MCF 10A (cell line): ENCODE measurements at regions of chr18 and their contacts with region 1.

Region 1: GRCh38 chr18:50218432-50219197 is 23.7 kb upstream of the MYO5B start:
- DNase-seq: peak; percentile 53
- H3K4me3 Mint-ChIP-seq: no peak overlapping the region
- H3K27ac Mint-ChIP-seq: no peak overlapping the region
- H3K4me1 Mint-ChIP-seq: no peaks in the 10 kb centered on the region
- H3K27me3 Mint-ChIP-seq: no peaks in the 10 kb centered on the region
- CTCF ChIP-seq: peak; percentile 53

Region 2: GRCh38 chr18:49784427-49785185 is 434.0 kb before region 1 on chr18:
- CTCF ChIA-PET with region 1: no interaction called
- POLR2A ChIA-PET with region 1: no interaction called
- intact Hi-C with region 1: no loop called
- DNase-seq: no peak
- H3K4me3 Mint-ChIP-seq: no peak overlapping the region
- H3K27ac Mint-ChIP-seq: no peak overlapping the region
- H3K4me1 Mint-ChIP-seq: peaks cover 14% of the 10 kb centered on the region
- H3K27me3 Mint-ChIP-seq: no peaks in the 10 kb centered on the region
- CTCF ChIP-seq: peak; percentile 31

Region 3: DNA sequence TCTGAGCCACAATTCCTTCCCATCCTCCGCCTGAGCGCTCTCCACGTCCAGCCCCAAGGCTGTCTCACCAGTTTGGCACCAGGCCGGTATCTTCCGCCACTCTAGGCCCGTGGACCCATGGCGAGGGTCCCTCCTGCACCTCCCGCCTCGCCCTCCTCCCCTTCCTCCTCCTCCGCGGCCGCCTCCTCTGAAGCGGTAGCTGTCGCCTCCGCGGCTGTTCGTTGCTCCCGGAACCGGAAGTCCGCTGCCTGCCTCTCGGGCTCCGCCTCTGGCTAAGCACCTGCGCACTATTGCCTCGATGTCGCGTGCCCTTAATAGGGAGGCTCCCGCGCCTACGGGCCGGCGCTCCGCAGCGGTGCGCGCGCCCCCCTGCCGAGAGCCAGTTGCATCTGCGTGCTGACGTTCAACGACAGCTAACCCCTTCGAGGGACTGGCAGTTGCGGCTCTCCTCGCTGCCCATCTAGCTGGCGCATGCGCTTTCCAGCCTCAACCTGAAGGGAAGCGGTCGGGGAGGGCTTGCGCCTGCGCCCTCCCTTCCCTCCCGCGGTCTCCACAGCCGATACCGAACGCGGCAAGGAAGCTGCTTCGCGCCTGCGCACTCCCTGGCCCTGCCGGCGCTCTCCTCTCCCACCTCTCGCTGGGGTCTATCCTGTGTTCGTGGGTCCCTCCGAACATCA is 62.8 kb after region 1 on chr18 and contains the start of gene MBD1:
- CTCF ChIA-PET with region 1: interaction called, 4 read pairs
- POLR2A ChIA-PET with region 1: no interaction called
- intact Hi-C with region 1: loop called (anchors 2 kb)
- DNase-seq: peak; percentile 97
- H3K4me3 Mint-ChIP-seq: peak within 1 kb of the TSS; percentile 96
- H3K27ac Mint-ChIP-seq: peak within 1 kb of the TSS; percentile 97
- H3K4me1 Mint-ChIP-seq: peaks cover 54% of the 10 kb centered on the region
- H3K27me3 Mint-ChIP-seq: no peaks in the 10 kb centered on the region
- CTCF ChIP-seq: no peak
- total RNA-seq, gene MBD1: 203 and 227 TPM in 2 replicates